Caco-2 (cell line): ENCODE measurements at regions of chr7 and their contacts with region 1.

Region 1: GRCh38 chr7:149838224-149838947 is at the start of gene ZNF862:
- DNase-seq: peak; percentile 97
- H3K4me3 ChIP-seq: peak within 1 kb of the TSS; percentile 75
- H3K4me3 Mint-ChIP-seq: peak within 1 kb of the TSS; percentile 74
- H3K27ac Mint-ChIP-seq: peak within 1 kb of the TSS; percentile 11
- H3K4me1 ChIP-seq: peaks cover 7% of the 10 kb centered on the region
- H3K4me1 Mint-ChIP-seq: no peaks in the 10 kb centered on the region
- H3K27me3 ChIP-seq: no peaks in the 10 kb centered on the region
- H3K27me3 Mint-ChIP-seq: peaks cover 27% of the 10 kb centered on the region
- CTCF ChIP-seq: no peak
- total RNA-seq, gene ZNF862: 3.1 and 3.5 TPM in 2 replicates

Region 2: DNA sequence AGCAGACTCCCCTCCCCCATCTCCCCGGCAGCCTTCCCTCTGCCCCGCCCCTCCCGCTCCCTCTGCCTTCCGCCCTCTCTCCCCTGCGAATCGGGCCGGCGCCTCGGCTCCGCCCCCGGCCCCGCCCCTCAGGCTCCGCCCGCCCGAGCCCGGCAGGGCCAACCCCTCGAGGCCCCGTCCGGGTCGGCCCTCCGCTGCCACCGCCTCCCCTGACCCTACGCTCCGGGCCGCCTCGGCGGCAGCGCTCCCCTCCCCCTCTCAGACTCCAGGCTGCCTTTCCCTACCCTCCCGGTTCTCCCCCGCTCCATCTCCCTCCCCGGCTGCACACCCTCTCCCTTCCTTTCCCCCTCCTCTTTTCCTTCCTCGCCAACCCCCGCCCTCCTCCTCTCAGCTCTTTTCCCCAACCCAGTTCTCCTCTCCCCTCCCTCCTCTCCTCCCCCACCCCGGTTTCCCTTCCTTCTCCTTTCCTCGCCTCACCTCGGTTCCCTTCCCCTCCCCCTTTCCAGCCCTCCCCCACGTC is 66.6 kb before region 1 on chr7:
- CTCF ChIA-PET with region 1: no interaction called
- POLR2A ChIA-PET with region 1: no interaction called
- intact Hi-C with region 1: loop called (anchors 5 kb)
- DNase-seq: peak; percentile 87 to 93
- H3K4me3 ChIP-seq: peak overlapping the region; percentile 70
- H3K4me3 Mint-ChIP-seq: peak overlapping the region; percentile 81
- H3K27ac Mint-ChIP-seq: no peak overlapping the region
- H3K4me1 ChIP-seq: no peaks in the 10 kb centered on the region
- H3K4me1 Mint-ChIP-seq: peaks cover 6% of the 10 kb centered on the region
- H3K27me3 ChIP-seq: no peaks in the 10 kb centered on the region; the same call in 1 of the 2 replicates
- H3K27me3 Mint-ChIP-seq: peaks cover 13% of the 10 kb centered on the region
- CTCF ChIP-seq: no peak

Region 3: DNA sequence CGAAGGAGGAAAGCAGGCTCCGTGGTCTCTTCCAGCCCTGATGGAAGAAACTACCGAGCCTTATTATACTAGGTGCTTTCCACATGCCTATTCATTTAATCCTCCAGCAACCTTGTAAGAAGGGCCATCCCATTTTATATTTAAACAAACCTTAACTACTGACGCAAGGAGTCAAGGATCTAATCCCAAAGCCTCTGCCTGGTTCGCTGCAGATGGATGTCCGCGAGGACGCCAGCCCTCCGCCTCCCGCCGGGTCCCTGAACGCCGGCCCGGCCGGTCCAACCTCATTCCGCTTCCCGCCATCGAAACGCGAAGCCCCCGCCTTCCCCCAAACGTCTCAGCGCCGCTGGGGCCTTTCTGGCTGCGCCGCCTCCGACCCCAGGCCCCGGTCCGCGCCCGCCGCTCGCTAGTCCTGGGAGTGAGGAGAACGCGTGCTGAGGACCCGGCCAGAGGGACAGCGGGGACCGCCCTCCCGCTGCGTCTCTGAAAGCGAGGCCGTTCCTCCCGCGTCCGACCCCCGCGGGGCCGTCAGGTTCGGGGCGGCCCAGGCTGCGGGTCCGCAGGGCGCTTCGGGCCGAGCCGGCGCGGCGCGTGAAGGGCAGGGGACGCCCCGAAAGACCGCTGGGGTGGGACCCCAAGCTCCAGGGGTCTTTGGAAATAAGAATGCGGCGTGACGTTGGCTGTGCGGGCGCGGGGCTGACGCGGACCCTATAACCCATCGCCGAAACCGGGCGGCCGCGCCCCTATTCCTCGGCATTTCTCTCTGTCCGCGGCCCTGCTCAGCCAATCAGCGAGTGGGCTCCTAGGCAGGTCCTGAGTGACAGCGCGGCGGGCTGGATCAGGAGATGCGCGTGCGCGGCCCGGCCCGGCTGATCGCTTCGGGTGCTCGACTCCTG is 34.9 kb after region 1 on chr7 and contains the start of gene ATP6V0E2:
- CTCF ChIA-PET with region 1: no interaction called
- POLR2A ChIA-PET with region 1: no interaction called
- intact Hi-C with region 1: loop called (anchors 1 kb)
- DNase-seq: peak; percentile 96
- H3K4me3 ChIP-seq: peak within 1 kb of the TSS; percentile 71
- H3K4me3 Mint-ChIP-seq: peak within 1 kb of the TSS; percentile 70
- H3K27ac Mint-ChIP-seq: peak within 1 kb of the TSS; percentile 63
- H3K4me1 ChIP-seq: peaks cover 9% of the 10 kb centered on the region; the same call in 1 of the 2 replicates
- H3K4me1 Mint-ChIP-seq: peaks cover 22% of the 10 kb centered on the region
- H3K27me3 ChIP-seq: no peaks in the 10 kb centered on the region
- H3K27me3 Mint-ChIP-seq: no peaks in the 10 kb centered on the region
- CTCF ChIP-seq: no peak
- total RNA-seq, gene ATP6V0E2: 41.6 and 53.9 TPM in 2 replicates